Sigmoid colon (tissue), 7 donors: ENCODE measurements at regions of chr12 and their contacts with region 1.

Region 1: GRCh38 chr12:121678716-121679580 is 9.5 kb upstream of the MORN3 start:
- DNase-seq: no peak
- H3K4me3 ChIP-seq: no peak overlapping the region
- H3K27ac ChIP-seq: no peak overlapping the region
- H3K4me1 ChIP-seq: no peaks in the 10 kb centered on the region
- H3K27me3 ChIP-seq: no peaks in the 10 kb centered on the region
- CTCF ChIP-seq: no peak
- EP300 ChIP-seq: no peak
- POLR2A ChIP-seq: no peak

Region 2: DNA sequence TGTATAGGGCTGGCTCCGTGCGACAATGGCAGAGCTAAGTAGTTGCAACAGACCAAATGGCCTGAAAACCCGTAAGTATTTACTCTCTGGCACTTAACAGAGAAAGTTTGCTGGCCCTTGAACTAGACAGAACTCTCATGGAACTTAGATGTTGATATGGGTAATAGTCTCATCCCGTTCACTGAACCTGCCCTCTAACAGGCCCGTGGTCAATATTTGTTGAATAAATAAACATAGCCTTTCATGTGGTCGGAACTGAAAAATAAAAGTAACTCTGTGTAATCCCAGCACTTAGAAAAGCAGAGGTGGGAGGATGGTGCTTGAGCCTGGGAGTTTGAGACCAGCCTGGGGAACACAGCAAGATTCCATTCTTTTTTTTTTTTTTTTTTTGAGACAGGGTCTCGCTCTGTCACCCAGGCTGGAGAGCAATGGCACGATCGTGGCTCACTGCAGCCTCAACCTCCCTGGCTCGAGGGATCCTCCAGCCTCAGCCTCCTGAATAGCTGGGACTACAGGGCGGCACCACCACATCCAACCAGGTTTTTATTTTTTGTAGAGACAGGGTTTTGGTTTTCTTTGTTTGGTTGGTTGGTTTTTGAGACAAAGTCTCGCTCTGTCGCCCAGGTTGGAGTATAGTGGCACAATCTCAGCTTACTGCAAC is 127.8 kb before region 1 on chr12:
- intact Hi-C with region 1: loop called (anchors 1 kb)
- DNase-seq: no peak
- H3K4me3 ChIP-seq: no peak overlapping the region
- H3K27ac ChIP-seq: no peak overlapping the region
- H3K4me1 ChIP-seq: peaks cover 0 to 3% (median 0%) of the 10 kb centered on the region in 4 donors
- H3K27me3 ChIP-seq: no peaks in the 10 kb centered on the region
- CTCF ChIP-seq: no peak
- EP300 ChIP-seq: no peak
- POLR2A ChIP-seq: no peak